ENCODE measurements at regions of chr1 and their contacts with region 1.

Region 1: GRCh38 chr1:9874959-9875635 is 35.0 kb downstream of the CTNNBIP1 start:
- DNase-seq: peak; percentile 96
- CTCF ChIP-seq: peak; percentile 89

Region 2: DNA sequence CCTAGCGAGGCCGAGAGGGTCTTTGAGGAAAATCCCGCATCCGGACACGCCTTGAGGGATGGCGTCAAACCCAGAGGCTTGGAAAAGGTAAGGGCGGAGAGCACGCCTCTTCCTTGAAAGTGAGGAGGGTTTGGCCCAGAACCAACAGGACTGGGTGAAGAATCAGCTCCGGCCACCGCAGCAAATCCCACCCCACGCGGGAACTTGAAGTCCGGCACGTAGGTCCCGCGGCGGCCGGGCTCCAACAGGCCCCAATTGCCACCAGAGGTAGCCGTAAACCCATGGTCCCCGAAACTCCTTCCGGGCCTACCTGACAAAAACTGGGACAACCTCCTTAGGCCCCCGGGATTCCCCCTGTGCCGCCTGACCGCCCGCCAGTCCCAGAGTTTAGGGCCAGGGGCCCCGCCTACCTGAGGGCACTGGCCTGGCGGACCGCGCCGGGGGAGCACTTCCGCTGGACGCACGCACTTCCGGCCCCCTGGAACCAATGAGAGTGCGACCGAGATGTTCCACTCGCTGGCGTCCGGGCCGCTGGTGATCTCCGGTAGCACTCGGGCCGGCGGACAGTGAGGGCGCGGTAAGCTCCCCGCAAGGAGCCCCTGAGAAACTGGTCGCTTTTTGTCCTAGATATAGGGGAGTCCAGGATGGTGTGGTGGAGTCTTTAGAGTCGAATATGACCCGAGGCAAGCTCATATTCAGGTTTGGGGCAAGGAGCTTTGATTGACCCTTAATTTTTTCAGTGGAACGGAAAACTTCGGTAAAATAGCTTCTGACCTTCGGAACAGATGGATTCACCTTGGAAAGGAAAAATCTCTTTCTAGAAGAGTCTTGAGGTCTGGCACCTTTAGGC is 68.1 kb after region 1 on chr1 and contains the starts of genes LZIC and NMNAT1:
- in situ Hi-C with region 1: loop called (anchors 10 kb)
- DNase-seq: peak; percentile 93
- CTCF ChIP-seq: no peak